Activated CD4-positive, alpha-beta memory T cell treated with anti-CD3 and anti-CD28 coated beads, Interleukin-2, amount 10 ng/mL, durations not matched to agents 7 days and 5 days (primary cell): ENCODE measurements at regions of chr11 and their contacts with region 1.

Region 1: DNA sequence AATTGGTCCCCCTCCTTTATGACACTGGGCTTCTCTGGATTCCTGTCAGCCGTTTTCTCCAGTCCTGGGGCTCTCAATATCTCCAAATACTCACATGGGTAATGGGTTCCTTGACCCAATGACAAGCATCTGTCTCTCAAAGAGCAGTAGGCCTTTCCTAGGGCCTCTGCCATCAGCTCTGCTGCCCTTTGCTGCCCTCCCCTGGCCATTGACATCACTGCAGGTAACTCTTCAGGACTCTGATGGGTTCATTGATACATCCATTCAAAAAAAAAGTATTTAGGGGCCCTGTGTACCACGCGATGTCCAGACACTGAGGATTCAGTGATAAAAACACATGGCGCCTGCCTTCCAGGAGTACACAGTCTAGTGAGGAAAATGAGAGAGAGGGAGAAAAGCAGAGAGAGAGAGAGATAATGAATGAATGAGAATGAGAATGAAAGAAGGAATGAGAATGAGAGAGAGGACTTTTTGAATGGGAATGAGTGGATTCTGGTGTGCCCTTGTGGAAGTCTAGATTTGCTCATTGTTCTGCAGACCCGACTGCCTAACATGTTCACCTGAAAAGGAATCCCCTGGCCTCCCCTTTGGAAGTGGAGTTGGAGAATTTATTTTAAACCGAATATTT is 42.6 kb upstream of the OLFML1 start:
- DNase-seq: peak; percentile 78
- H3K4me3 Mint-ChIP-seq: no peak overlapping the region
- H3K27ac Mint-ChIP-seq: no peak overlapping the region
- H3K4me1 Mint-ChIP-seq: no peaks in the 10 kb centered on the region
- H3K27me3 Mint-ChIP-seq: no peaks in the 10 kb centered on the region

Region 2: DNA sequence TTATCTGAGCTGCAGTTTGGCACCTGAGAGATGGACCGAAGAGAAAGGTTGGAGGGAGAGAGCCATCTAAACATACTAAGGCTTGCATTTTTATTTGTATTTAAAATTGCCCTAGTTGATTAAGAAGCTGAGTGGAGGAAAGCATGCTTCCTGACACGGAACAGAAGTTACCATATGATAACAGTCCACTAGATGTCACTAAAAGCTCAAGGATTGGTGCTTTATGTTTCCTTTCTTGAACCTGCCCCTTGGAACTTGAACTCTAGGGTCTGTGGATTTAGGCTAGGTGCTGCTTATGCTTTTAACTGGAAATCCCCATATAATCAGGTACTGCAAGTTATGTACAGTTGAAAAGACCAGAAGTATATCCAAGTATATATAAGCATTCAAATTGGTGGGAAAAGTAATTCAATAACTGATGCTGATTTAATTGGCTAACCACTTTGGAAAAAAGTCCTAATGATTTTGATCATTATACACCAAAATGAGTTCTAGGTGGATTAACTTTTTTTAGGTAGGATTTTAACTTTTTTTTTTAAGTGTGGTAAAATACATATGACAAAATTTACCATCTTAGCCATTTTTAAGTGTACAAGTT is 344.4 kb before region 1 on chr11:
- CTCF ChIA-PET with region 1: interaction called, 24 read pairs
- POLR2A ChIA-PET with region 1: no interaction called
- DNase-seq: no peak
- H3K4me3 Mint-ChIP-seq: no peak overlapping the region
- H3K27ac Mint-ChIP-seq: no peak overlapping the region
- H3K4me1 Mint-ChIP-seq: no peaks in the 10 kb centered on the region
- H3K27me3 Mint-ChIP-seq: peaks cover 19% of the 10 kb centered on the region

Region 3: GRCh38 chr11:7299393-7299792 is 143.3 kb before region 1 on chr11:
- CTCF ChIA-PET with region 1: no interaction called
- POLR2A ChIA-PET with region 1: no interaction called
- DNase-seq: no peak
- H3K4me3 Mint-ChIP-seq: no peak overlapping the region
- H3K27ac Mint-ChIP-seq: no peak overlapping the region
- H3K4me1 Mint-ChIP-seq: no peaks in the 10 kb centered on the region
- H3K27me3 Mint-ChIP-seq: no peaks in the 10 kb centered on the region

Region 4: DNA sequence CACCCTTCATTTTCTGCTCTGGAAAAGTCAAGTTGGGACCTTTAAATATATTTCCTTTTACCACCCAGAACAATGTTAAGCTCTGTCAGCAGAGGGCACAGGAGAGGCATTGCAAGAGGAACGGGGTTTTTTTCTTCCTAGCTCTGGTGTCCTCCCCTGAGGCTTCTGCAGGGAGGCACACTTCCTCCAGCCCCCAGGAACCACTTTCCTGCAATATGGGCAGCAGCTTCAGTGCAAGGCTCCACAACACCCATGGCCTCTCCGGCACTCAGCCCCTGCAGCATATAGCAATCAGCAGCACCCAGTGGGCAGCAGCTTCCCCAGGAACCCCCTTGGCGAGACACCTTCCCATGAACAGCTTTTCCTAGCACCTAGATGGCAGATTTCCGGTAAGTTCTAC is 89.6 kb before region 1 on chr11:
- CTCF ChIA-PET with region 1: interaction called, 33 read pairs
- POLR2A ChIA-PET with region 1: no interaction called
- DNase-seq: peak; percentile 23
- H3K4me3 Mint-ChIP-seq: no peak overlapping the region
- H3K27ac Mint-ChIP-seq: no peak overlapping the region
- H3K4me1 Mint-ChIP-seq: no peaks in the 10 kb centered on the region
- H3K27me3 Mint-ChIP-seq: no peaks in the 10 kb centered on the region

Region 5: DNA sequence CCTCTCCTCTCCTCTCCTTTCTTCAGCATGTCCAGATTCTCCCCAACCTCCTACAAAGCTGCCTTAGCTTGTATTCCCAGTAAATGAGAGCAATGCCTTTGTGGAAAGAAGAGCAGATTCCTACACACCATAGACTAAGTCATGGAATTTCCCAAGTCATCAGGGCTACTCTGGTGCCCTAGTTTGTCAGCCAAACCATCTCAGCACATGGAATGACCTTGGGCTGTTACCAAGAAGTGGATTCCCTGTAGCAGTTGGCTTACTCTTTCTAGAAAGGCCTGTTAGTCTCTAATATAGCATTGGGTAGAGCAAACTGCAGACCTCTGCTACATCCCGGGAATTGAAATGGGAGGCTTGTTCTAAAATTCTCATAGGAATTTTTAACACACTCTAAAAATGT is 66.3 kb before region 1 on chr11:
- CTCF ChIA-PET with region 1: no interaction called
- POLR2A ChIA-PET with region 1: no interaction called
- DNase-seq: no peak
- H3K4me3 Mint-ChIP-seq: no peak overlapping the region
- H3K27ac Mint-ChIP-seq: no peak overlapping the region
- H3K4me1 Mint-ChIP-seq: no peaks in the 10 kb centered on the region
- H3K27me3 Mint-ChIP-seq: peaks cover 5% of the 10 kb centered on the region